Activated T-helper 2 cell treated with anti-CD3 and anti-CD28 coated beads, Interferon-gamma antibody, Interleukin-2, Interleukin-4, amounts not matched to agents 10 μg/mL and 5 μg/mL and 100 μg/mL, durations not matched to agents 14 hours and 24 hours and 36 hours (primary cell): ENCODE measurements at regions of chr12 and their contacts with region 1.

Region 1: DNA sequence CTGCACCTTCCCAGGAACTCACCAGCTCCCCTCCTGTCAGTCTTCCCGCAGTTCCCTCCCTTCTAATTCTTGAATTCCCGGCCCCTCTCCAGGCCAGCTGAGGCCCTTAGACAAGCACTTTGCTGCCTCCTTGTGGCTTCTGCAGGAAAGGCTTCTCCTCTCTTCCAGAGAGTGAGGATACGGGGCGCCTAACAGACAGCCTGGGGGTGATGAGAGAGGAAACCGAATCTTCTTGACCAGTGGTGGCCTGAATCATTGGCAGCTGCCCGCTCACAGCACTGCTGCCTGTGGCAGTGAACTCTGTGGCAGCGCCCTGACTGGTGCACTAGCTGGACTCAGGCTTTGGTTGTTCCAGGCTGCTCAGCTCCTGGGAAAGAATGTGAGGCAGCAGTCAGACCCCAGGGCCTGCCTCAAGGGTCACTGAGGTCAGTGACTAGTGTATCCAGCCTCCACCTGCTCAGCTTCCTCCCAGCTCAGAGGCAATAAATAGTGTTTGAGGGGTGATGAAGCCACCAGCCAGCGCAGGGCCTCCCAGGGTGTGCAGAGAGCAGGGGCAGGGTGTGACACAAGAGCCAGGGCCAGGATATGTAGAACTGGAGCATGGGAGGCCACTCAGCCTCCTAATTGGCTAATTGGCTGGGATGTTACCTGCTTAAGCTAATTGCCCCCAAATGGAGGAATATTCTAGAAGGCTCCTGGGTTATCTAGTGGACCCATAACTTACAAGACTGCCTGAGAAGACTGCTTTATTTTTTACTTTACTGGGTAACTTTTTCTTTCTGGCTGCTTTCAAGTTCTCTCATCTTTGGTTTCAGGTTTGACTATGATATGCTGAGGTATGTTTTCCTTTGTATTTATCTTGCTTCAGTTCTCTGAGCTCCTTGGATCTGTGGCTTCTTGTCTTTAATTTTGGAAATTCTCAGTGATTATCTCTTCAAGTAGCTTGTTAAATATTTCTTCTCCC is 12.9 kb upstream of the MCRS1 start:
- DNase-seq: peak; percentile 40
- H3K4me3 Mint-ChIP-seq: no peak overlapping the region
- H3K27ac Mint-ChIP-seq: peak overlapping the region; percentile 51
- H3K4me1 Mint-ChIP-seq: peaks cover 16% of the 10 kb centered on the region
- H3K27me3 Mint-ChIP-seq: no peaks in the 10 kb centered on the region

Region 2: GRCh38 chr12:49358483-49359141 is 222.2 kb before region 1 on chr12:
- intact Hi-C with region 1: loop called (anchors 2 kb)
- DNase-seq: peak; percentile 54
- H3K4me3 Mint-ChIP-seq: no peak overlapping the region
- H3K27ac Mint-ChIP-seq: no peak overlapping the region
- H3K4me1 Mint-ChIP-seq: peaks cover 4% of the 10 kb centered on the region
- H3K27me3 Mint-ChIP-seq: peaks cover 29% of the 10 kb centered on the region